ENCODE measurements at regions of chr1 and their contacts with region 1.

Region 1: DNA sequence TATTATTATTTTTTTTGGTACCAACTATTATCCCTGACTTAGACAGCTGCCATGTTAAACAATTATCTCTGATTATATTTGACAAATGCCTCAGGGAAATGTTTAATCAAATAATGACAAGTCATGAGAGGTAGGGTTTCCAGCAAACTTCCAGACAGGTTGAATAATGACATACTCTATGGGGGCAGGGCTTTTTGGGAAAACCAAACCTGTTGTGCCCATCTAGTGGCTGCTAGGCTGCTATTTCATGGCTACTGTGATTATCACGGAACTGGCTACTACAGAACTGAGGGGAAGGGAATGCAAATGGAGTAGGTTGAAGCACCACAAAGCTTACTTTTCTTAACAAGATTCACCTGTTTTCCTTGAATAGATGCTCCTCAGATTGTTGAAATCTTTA is 77.6 kb downstream of the DUSP10 start:
- DNase-seq: no peak

Region 2: GRCh38 chr1:221478050-221478949 is 186.0 kb before region 1 on chr1:
- intact Hi-C with region 1: no loop called
- DNase-seq: peak; percentile 82

Region 3: GRCh38 chr1:221778535-221779142 is 114.4 kb after region 1 on chr1:
- intact Hi-C with region 1: no loop called
- DNase-seq: no peak

Region 4: DNA sequence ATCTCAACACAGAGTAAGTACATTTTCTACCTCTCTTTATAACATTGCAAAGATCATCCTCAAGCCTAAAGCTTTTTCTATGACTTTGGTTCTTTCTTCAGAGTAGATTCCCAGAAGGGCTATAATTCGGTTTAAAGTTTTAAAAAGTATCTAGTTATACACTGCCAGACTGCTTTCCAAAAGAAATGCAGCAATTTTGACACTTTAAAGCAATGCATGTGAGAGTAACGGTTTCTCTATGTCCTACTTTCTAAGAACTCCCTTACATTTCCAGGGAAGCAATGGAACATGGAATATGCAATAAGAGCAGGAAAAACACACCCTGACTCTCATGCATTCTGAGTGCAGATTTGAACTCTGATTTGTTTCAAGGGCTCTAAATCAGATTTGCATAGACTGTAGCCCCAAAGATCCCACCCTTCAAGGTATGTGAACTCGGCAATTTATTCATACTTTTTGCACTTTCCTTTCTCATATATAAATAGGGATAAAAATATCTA is 552.1 kb after region 1 on chr1:
- intact Hi-C with region 1: loop called in 1 of 2 experiments (anchors 5 kb)
- DNase-seq: no peak

Measured in posterior vena cava (tissue), 2 donors.